OCI-LY7 (cell line): ENCODE measurements at regions of chr9 and their contacts with region 1.

Region 1: GRCh38 chr9:90827181-90827871 is 25.7 kb downstream of the SYK start:
- DNase-seq: peak; percentile 91
- H3K4me3 ChIP-seq: peak overlapping the region; percentile 73
- H3K27ac ChIP-seq: peak overlapping the region; percentile 91
- H3K4me1 ChIP-seq: peaks cover 67% of the 10 kb centered on the region
- CTCF ChIP-seq: no peak

Region 2: GRCh38 chr9:90773617-90774016 is 53.7 kb before region 1 on chr9:
- CTCF ChIA-PET with region 1: no interaction called
- POLR2A ChIA-PET with region 1: interaction called, 6 read pairs
- intact Hi-C with region 1: loop called (anchors 1 kb)
- DNase-seq: peak; percentile 66
- H3K4me3 ChIP-seq: no peak overlapping the region
- H3K27ac ChIP-seq: peak overlapping the region; percentile 69
- H3K4me1 ChIP-seq: peaks cover 32% of the 10 kb centered on the region
- CTCF ChIP-seq: peak; percentile 78

Region 3: GRCh38 chr9:90795871-90796317 is 31.4 kb before region 1 on chr9:
- CTCF ChIA-PET with region 1: interaction called, 9 read pairs
- POLR2A ChIA-PET with region 1: interaction called, 18 read pairs
- intact Hi-C with region 1: loop called (anchors 1 kb)
- DNase-seq: peak; percentile 60
- H3K4me3 ChIP-seq: peak overlapping the region; percentile 38
- H3K27ac ChIP-seq: peak overlapping the region; percentile 88
- H3K4me1 ChIP-seq: peaks cover 56% of the 10 kb centered on the region
- CTCF ChIP-seq: no peak

Region 4: DNA sequence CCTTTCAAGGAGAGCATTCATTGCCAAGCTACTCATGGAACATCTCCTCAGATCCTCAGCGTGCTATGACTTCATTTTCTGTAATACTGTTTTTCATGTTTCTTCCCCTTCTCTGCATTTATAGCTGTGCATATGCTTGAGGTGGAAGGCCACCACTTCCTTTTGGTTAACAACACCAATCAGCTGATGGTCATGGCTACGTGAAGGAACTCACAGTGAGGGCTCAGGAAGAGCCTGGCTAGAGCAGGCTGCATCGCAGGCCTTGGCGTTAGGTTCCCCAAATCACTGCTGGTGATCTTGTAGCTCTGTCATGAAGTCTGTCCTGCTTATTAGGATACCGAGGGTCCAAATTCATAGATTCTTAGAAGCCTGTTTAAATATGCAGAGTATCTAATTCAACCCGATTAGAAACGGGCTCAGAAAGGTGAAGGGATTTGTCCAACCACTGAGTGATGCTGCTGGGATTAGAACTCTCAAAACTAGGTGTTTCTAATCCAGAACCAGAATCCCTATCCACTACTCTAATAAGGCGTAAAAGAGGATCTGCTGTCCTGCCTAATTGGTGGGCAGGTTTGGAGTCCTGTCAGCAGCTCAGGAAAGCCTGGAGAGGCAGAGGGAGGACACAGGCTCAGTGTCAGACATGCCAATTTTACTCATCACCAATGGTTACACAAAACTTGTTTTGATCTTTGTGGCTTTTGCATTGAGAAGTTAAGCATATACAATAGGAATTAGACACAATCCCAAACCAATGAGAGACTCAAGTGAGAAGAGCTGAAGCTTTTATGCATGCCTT is 18.2 kb before region 1 on chr9:
- CTCF ChIA-PET with region 1: interaction called, 9 read pairs
- POLR2A ChIA-PET with region 1: interaction called, 94 read pairs
- intact Hi-C with region 1: loop called (anchors 1 kb)
- DNase-seq: peak; percentile 36
- H3K4me3 ChIP-seq: peak overlapping the region; percentile 8
- H3K27ac ChIP-seq: peak overlapping the region; percentile 95
- H3K4me1 ChIP-seq: peaks cover 98% of the 10 kb centered on the region
- CTCF ChIP-seq: no peak

Region 5: GRCh38 chr9:90815183-90815943 is 12.0 kb before region 1 on chr9:
- CTCF ChIA-PET with region 1: interaction called, 9 read pairs
- POLR2A ChIA-PET with region 1: interaction called, 94 read pairs
- intact Hi-C with region 1: loop called (anchors 1 kb)
- DNase-seq: peak; percentile 85
- H3K4me3 ChIP-seq: peak overlapping the region; percentile 45
- H3K27ac ChIP-seq: peak overlapping the region; percentile 95
- H3K4me1 ChIP-seq: peaks cover 62% of the 10 kb centered on the region
- CTCF ChIP-seq: no peak

Region 6: GRCh38 chr9:90881648-90882047 is 54.3 kb after region 1 on chr9:
- CTCF ChIA-PET with region 1: no interaction called
- POLR2A ChIA-PET with region 1: no interaction called
- intact Hi-C with region 1: loop called (anchors 5 kb)
- DNase-seq: peak; percentile 98
- H3K4me3 ChIP-seq: peak overlapping the region; percentile 40
- H3K27ac ChIP-seq: peak overlapping the region; percentile 92
- H3K4me1 ChIP-seq: peaks cover 48% of the 10 kb centered on the region
- CTCF ChIP-seq: no peak